Activated T-helper 1 cell treated with anti-CD3 and anti-CD28 coated beads, Interleukin-12 subunit alpha, Interleukin-12 subunit beta, Interleukin-2, Interleukin-4 antibody, amounts not matched to agents 30 ng/mL and 10 ng/mL and 1 ng/mL, durations not matched to agents 14 hours and 24 hours and 36 hours (primary cell): ENCODE measurements at regions of chrX and their contacts with region 1.

Region 1: GRCh38 chrX:134431894-134432293 is 28.1 kb upstream of the HPRT1 start:
- DNase-seq: no peak
- H3K4me3 Mint-ChIP-seq: no peak overlapping the region
- H3K27ac Mint-ChIP-seq: no peak overlapping the region
- H3K4me1 Mint-ChIP-seq: no peaks in the 10 kb centered on the region
- H3K27me3 Mint-ChIP-seq: no peaks in the 10 kb centered on the region

Region 2: GRCh38 chrX:134443020-134443419 is 11.1 kb after region 1 on chrX:
- intact Hi-C with region 1: loop called (anchors 1 kb)
- DNase-seq: no peak
- H3K4me3 Mint-ChIP-seq: no peak overlapping the region
- H3K27ac Mint-ChIP-seq: no peak overlapping the region
- H3K4me1 Mint-ChIP-seq: peaks cover 5% of the 10 kb centered on the region
- H3K27me3 Mint-ChIP-seq: no peaks in the 10 kb centered on the region